ENCODE measurements at regions of chr11 and their contacts with region 1.

Region 1: GRCh38 chr11:65506770-65507505 is 8.1 kb downstream of the MALAT1 start:
- DNase-seq: peak in 3 of 6 donors; percentile 59 to 77 (median 59)
- ATAC-seq: peak; percentile 5 to 17 (median 10)
- H3K4me3 ChIP-seq: no peak overlapping the region
- H3K27ac ChIP-seq: peak overlapping the region in 3 of 4 donors; percentile 42 to 99 (median 96)
- H3K4me1 ChIP-seq: peaks cover 4 to 21% (median 10%) of the 10 kb centered on the region in 3 donors
- H3K27me3 ChIP-seq: no peaks in the 10 kb centered on the region
- CTCF ChIP-seq: no peak

Region 2: DNA sequence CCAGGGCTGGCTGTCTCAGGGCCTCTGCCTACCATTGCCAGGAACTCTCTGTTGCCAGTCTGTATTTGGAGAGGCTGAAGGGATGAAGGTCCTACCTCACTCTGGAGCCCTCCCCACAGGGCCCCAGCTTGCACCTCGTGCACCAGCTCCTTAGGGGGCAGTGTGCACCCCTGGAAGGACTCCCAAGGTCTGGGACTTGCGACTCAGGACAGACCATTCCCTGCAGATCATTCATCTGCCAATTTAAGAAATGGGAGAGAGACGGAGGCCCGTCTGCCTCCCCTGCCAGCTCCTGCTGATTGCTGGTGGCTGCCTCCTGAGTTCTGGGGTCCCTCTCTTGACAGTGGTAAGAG is 35.6 kb before region 1 on chr11:
- intact Hi-C with region 1: loop called in 1 of 3 experiments (anchors 5 kb)
- DNase-seq: peak; percentile 76 to 87 (median 81)
- ATAC-seq: peak; percentile 73 to 85 (median 82)
- H3K4me3 ChIP-seq: peak overlapping the region in 1 of 4 donors; percentile 20
- H3K27ac ChIP-seq: peak overlapping the region; percentile 78 to 93 (median 88)
- H3K4me1 ChIP-seq: peaks cover 15 to 31% (median 24%) of the 10 kb centered on the region in 3 donors
- H3K27me3 ChIP-seq: no peaks in the 10 kb centered on the region
- CTCF ChIP-seq: peak; percentile 29 to 55 (median 46)